Caco-2 (cell line): ENCODE measurements at regions of chr3 and their contacts with region 1.

Region 1: DNA sequence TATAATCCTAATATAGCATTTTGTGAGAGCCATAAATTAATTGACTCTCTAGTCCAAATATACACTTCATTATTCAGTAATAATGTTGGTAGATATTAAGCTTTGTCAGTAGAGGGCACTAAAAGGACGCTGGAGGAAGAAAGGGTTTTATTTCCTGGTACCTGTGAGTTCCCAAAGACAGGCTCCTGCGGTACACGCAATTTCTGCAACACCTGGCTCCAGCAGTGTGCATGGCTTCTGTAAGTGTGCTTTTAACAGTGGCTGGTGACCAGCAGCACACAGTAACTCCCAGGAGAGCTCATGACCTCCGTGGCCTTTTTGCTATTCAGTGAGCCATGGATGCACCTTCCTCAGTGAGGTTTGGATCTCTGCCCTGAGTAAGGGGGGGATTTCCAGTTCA is 338.3 kb upstream of the ZNF385D start:
- DNase-seq: peak; percentile 29 to 46
- H3K4me3 ChIP-seq: no peak overlapping the region
- H3K4me3 Mint-ChIP-seq: no peak overlapping the region
- H3K27ac Mint-ChIP-seq: no peak overlapping the region
- H3K4me1 ChIP-seq: no peaks in the 10 kb centered on the region
- H3K4me1 Mint-ChIP-seq: no peaks in the 10 kb centered on the region
- H3K27me3 ChIP-seq: no peaks in the 10 kb centered on the region
- H3K27me3 Mint-ChIP-seq: peaks cover 9% of the 10 kb centered on the region
- CTCF ChIP-seq: peak; percentile 37 to 40

Region 2: DNA sequence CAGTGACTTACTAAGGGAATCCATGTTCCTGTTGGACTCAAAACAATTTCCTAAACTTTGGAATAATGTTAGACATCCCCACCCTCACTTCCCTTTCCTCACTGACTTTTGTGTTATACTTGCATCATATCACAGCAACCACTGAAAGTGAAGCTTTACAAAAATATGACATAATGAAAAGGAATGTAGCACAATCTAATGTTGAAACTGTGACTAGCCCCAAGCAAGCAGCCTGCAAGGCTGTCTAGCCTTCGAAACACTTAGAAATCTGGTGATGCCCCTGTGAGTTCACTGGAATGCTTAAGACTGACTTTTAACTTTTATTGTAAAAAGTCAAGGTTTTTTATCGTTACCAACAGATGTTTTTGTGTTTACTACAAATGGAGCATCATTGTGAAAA is 134.6 kb before region 1 on chr3:
- CTCF ChIA-PET with region 1: no interaction called
- POLR2A ChIA-PET with region 1: no interaction called
- intact Hi-C with region 1: no loop called
- DNase-seq: no peak
- H3K4me3 ChIP-seq: no peak overlapping the region
- H3K4me3 Mint-ChIP-seq: no peak overlapping the region
- H3K27ac Mint-ChIP-seq: no peak overlapping the region
- H3K4me1 ChIP-seq: no peaks in the 10 kb centered on the region
- H3K4me1 Mint-ChIP-seq: no peaks in the 10 kb centered on the region
- H3K27me3 ChIP-seq: no peaks in the 10 kb centered on the region
- H3K27me3 Mint-ChIP-seq: peaks cover 2% of the 10 kb centered on the region
- CTCF ChIP-seq: no peak

Region 3: DNA sequence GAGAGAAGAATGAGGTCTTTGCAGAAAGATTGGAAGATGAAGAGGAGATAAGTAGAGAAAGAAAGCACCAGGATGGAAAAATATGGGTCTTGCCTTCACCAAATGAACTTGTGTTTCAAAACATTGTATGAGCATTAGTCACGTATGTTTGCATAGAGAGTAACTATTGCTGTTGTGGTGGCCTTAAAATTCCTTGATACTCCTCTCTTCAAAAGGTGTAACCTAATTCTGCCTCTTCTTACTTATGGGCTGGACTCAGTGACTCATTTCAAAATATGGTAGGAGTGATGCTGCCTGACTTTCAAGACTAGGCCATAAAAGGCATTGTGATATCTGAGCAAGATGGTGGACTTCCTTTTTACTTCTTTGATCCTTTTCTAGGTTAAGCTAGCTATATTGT is 109.6 kb before region 1 on chr3:
- CTCF ChIA-PET with region 1: no interaction called
- POLR2A ChIA-PET with region 1: no interaction called
- intact Hi-C with region 1: no loop called
- DNase-seq: no peak
- H3K4me3 ChIP-seq: no peak overlapping the region
- H3K4me3 Mint-ChIP-seq: no peak overlapping the region
- H3K27ac Mint-ChIP-seq: no peak overlapping the region
- H3K4me1 ChIP-seq: no peaks in the 10 kb centered on the region
- H3K4me1 Mint-ChIP-seq: no peaks in the 10 kb centered on the region
- H3K27me3 ChIP-seq: no peaks in the 10 kb centered on the region
- H3K27me3 Mint-ChIP-seq: no peaks in the 10 kb centered on the region
- CTCF ChIP-seq: no peak

Region 4: GRCh38 chr3:22063500-22063899 is 25.8 kb before region 1 on chr3:
- CTCF ChIA-PET with region 1: no interaction called
- POLR2A ChIA-PET with region 1: no interaction called
- intact Hi-C with region 1: no loop called
- DNase-seq: no peak
- H3K4me3 ChIP-seq: no peak overlapping the region
- H3K4me3 Mint-ChIP-seq: no peak overlapping the region
- H3K27ac Mint-ChIP-seq: no peak overlapping the region
- H3K4me1 ChIP-seq: no peaks in the 10 kb centered on the region
- H3K4me1 Mint-ChIP-seq: no peaks in the 10 kb centered on the region
- H3K27me3 ChIP-seq: no peaks in the 10 kb centered on the region
- H3K27me3 Mint-ChIP-seq: peaks cover 9% of the 10 kb centered on the region
- CTCF ChIP-seq: no peak

Region 5: GRCh38 chr3:22208844-22209243 is 119.6 kb after region 1 on chr3:
- CTCF ChIA-PET with region 1: no interaction called
- POLR2A ChIA-PET with region 1: no interaction called
- intact Hi-C with region 1: no loop called
- DNase-seq: no peak
- H3K4me3 ChIP-seq: no peak overlapping the region
- H3K4me3 Mint-ChIP-seq: no peak overlapping the region
- H3K27ac Mint-ChIP-seq: no peak overlapping the region
- H3K4me1 ChIP-seq: no peaks in the 10 kb centered on the region
- H3K4me1 Mint-ChIP-seq: no peaks in the 10 kb centered on the region
- H3K27me3 ChIP-seq: no peaks in the 10 kb centered on the region
- H3K27me3 Mint-ChIP-seq: peaks cover 16% of the 10 kb centered on the region
- CTCF ChIP-seq: no peak

Region 6: GRCh38 chr3:22685597-22685996 is 596.3 kb after region 1 on chr3:
- CTCF ChIA-PET with region 1: no interaction called
- POLR2A ChIA-PET with region 1: no interaction called
- intact Hi-C with region 1: loop called (anchors 1 kb)
- DNase-seq: peak in 1 of 2 experiments; percentile 19
- H3K4me3 ChIP-seq: no peak overlapping the region
- H3K4me3 Mint-ChIP-seq: no peak overlapping the region
- H3K27ac Mint-ChIP-seq: no peak overlapping the region
- H3K4me1 ChIP-seq: no peaks in the 10 kb centered on the region
- H3K4me1 Mint-ChIP-seq: no peaks in the 10 kb centered on the region
- H3K27me3 ChIP-seq: no peaks in the 10 kb centered on the region
- H3K27me3 Mint-ChIP-seq: peaks cover 13% of the 10 kb centered on the region
- CTCF ChIP-seq: peak; percentile 26 to 36

Region 7: DNA sequence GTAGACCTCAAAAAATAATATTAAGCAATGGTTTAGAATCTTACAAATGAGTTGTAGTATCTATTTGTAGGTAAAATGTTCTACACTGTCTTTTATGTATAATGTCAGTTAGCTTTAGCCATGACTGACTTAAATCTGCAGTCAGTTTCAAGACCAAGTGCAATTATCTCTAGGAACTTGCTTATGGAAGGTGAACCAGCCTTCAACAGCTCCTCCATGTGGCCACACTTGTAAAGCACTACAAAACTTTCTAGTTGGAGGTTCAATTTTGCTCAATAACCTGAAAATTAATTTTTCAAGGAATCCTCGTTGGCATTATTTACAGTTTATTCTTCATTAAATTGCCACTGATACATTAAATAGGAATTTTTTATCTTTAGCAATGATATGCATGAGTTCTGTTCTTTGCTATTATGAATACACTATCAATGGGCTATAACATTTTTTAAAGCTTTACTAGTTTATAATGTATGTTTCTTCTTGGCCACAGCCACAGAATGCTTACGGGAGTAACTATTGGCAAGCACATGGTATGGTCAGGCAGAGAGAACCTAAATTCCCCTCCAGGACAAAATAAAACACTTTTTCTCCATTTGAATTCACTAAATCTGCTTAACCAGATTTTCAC is 798.5 kb after region 1 on chr3:
- CTCF ChIA-PET with region 1: no interaction called
- POLR2A ChIA-PET with region 1: no interaction called
- intact Hi-C with region 1: loop called (anchors 2 kb)
- DNase-seq: peak in 1 of 2 experiments; percentile 16
- H3K4me3 ChIP-seq: no peak overlapping the region
- H3K4me3 Mint-ChIP-seq: no peak overlapping the region
- H3K27ac Mint-ChIP-seq: no peak overlapping the region
- H3K4me1 ChIP-seq: no peaks in the 10 kb centered on the region
- H3K4me1 Mint-ChIP-seq: no peaks in the 10 kb centered on the region
- H3K27me3 ChIP-seq: no peaks in the 10 kb centered on the region
- H3K27me3 Mint-ChIP-seq: peaks cover 10% of the 10 kb centered on the region
- CTCF ChIP-seq: peak; percentile 45 to 70